Panc1 (cell line): ENCODE measurements at regions of chr1 and their contacts with region 1.

Region 1: GRCh38 chr1:229227298-229227919 is 43.5 kb upstream of the RAB4A start:
- DNase-seq: peak; percentile 35
- ATAC-seq: peak; percentile 58
- H3K4me3 ChIP-seq: no peak overlapping the region
- H3K27ac ChIP-seq: peak overlapping the region; percentile 18; the same call in 1 of the 2 replicates
- H3K4me1 ChIP-seq: peaks cover 48% of the 10 kb centered on the region
- H3K27me3 ChIP-seq: no peaks in the 10 kb centered on the region
- CTCF ChIP-seq: peak; percentile 94

Region 2: DNA sequence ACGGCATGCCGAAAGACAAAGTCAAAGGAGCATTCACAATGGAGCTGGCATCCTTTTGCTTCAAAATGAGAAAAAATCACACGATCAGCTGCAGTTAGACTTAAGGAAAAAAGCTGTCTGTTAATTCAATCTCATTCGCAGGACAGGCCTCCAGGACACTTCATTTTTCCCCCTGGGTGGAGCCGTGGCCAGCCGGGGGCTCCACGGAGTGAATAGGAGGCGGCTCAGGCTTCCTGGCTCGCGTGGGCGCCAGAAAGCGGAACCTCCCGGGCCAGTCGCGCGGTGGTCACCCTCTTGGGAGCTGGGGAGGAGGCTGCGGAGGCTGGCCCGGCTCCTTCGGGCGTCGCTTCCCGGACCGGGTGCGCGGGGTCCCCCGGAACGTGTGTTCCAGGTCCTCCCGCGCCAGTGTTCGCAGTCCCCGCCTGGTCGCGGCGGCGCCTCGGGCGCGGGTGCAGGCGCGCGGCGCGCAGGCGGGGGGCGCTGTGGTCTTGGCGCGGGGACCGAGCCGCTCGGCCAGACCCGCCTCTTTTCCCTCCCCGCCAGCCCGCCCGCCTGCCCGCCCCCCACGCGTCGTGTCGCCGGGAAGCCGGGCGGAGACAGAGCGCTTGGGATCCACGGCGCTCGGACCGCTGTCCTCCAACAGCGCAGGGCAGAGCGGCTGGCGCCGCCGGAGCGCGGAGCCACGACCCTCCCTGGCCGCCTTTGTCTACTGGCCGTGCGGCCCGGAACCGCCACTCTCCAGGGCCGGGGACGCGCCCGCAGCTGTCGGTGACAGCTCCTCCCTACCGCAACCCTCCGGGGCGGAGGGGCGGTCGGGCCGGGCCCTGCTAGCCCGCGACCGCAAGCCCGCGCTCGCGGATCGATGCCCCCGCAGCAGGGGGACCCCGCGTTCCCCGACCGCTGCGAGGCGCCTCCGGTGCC is 492.3 kb before region 1 on chr1 and contains the start of gene RHOU:
- CTCF ChIA-PET with region 1: interaction called, 5 read pairs
- POLR2A ChIA-PET with region 1: no interaction called
- in situ Hi-C with region 1: no loop called
- intact Hi-C with region 1: loop called (anchors 1 kb)
- DNase-seq: no peak
- ATAC-seq: peak; percentile 95
- H3K4me3 ChIP-seq: peak within 1 kb of the TSS; percentile 62 to 63
- H3K27ac ChIP-seq: peak within 1 kb of the TSS; percentile 70
- H3K4me1 ChIP-seq: peaks cover 7% of the 10 kb centered on the region
- H3K27me3 ChIP-seq: no peaks in the 10 kb centered on the region
- CTCF ChIP-seq: peak; percentile 96
- total RNA-seq, gene RHOU: 9.2 TPM

Region 3: DNA sequence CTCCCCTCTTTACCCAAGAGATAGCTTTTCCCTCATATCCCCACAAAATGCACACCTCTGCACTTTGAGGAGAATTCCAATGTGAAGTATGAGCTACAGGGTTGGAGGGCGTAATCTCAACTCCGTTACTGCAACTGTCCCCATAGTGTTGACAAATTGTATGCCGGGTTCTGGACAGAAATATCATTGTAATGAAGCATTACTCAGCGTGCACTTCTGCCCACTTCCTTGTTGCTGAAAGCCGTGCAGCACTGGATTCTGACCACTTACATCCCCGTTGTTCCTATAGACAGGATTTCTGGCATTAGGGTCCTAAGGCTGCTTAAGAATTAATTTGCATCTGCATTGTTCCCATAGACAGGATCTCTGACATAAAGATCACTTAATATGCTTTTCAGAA is 286.5 kb before region 1 on chr1:
- CTCF ChIA-PET with region 1: no interaction called
- POLR2A ChIA-PET with region 1: interaction called, 15 read pairs
- in situ Hi-C with region 1: no loop called
- intact Hi-C with region 1: no loop called
- DNase-seq: no peak
- ATAC-seq: no peak
- H3K4me3 ChIP-seq: no peak overlapping the region
- H3K27ac ChIP-seq: no peak overlapping the region
- H3K4me1 ChIP-seq: no peaks in the 10 kb centered on the region
- H3K27me3 ChIP-seq: no peaks in the 10 kb centered on the region; the same call in 1 of the 2 replicates
- CTCF ChIP-seq: no peak

Region 4: GRCh38 chr1:228998179-228998578 is 229.2 kb before region 1 on chr1:
- CTCF ChIA-PET with region 1: no interaction called
- POLR2A ChIA-PET with region 1: no interaction called
- in situ Hi-C with region 1: no loop called
- intact Hi-C with region 1: no loop called
- DNase-seq: no peak
- ATAC-seq: no peak
- H3K4me3 ChIP-seq: no peak overlapping the region
- H3K27ac ChIP-seq: no peak overlapping the region
- H3K4me1 ChIP-seq: no peaks in the 10 kb centered on the region
- H3K27me3 ChIP-seq: 0 out of 2 replicates have a peak, but pooled peaks cover 2% of the 10 kb centered on the region
- CTCF ChIP-seq: no peak

Region 5: DNA sequence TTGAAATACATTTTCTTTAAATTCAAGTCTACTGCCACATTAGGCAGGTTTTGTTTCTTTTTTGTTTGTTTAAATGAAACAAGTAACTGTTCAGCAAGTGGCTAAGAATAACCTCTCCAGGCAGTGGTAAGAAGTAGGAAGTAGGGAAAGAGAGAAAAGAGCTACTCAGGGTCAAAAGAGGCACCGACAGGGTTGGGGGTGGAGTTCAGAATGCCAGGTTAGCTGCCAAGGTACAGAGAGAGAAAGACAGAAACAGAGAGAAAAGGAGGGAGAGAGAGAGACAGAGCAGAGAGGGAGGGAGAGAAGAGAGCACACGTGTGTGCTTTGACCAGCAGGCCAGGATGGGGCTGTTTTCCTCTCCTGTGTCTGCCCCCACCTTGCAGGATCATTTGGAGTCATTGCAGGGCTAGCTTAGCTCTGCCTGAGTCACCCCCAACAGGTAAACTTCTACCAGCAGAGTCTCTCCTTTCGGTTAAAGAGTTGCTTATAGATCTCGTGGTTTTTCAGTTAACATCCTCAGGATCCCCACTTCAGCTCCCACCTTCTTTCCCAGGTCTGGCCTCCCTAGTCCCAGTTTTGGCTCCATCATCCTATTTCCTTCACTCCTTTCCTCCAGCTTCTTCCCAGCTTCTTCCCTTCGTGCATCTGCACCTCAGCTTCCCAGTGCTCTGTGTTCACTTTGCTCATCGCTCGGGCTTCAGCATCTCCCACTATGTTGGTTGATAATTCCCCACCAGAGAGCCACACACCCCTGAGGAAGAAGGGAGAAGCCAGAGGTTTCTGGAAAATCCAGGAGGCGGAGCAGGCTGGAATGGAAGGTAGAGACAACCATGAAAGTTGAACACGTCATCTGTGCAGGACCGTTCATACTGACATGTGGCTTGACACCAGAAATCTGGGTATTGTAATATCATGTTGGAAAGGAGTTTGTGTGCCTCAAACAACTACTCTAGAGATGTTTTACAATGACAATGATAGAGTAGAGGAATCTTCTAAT is 21.7 kb after region 1 on chr1:
- CTCF ChIA-PET with region 1: no interaction called
- POLR2A ChIA-PET with region 1: no interaction called
- in situ Hi-C with region 1: no loop called
- intact Hi-C with region 1: no loop called
- DNase-seq: no peak
- ATAC-seq: no peak
- H3K4me3 ChIP-seq: no peak overlapping the region
- H3K27ac ChIP-seq: no peak overlapping the region
- H3K4me1 ChIP-seq: 0 out of 2 replicates have a peak, but pooled peaks cover 3% of the 10 kb centered on the region
- H3K27me3 ChIP-seq: no peaks in the 10 kb centered on the region
- CTCF ChIP-seq: no peak

Region 6: DNA sequence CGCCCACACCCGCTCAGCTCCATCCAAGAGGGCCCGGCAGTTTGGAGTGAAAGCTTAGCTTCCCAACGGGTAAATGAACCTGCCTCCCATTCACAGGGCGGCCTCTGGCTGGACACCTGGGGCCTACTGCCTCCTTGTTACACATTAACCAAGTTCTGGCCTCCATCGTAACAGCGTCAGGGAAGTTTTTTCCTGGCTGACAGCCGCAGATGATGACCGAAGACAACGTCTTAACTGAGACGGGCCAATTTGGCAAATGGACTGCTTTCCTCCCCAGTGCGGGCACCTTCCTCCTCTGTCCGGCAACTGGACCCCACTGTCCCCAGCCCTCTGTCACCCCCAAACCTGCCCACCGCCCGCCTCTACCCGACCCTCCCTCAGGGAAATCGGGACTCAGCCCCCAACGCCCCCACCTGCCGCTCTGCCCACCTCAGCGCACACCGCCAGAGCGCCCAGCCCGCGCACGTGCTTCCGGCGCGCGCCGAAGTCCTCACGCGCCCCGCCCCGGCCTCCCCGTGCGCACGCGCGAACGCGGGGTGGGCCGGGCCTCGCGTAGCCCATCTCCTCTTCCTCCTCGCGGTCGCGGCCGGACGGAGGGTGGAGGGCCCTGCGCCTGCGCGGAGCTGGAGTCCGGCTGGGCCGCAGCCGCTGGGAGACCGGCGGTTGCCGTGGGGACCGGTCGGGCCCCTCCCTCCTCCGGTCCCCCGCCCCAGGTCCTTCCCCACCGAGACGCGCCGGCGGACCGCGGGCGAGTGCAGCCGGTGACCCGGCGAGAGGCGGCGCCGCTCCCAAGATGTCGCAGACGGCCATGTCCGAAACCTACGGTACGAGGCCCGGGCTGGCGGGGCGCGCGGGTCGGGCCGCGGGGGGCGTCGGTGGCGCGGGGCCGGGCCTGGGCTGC is 43.4 kb after region 1 on chr1 and contains the start of gene RAB4A:
- CTCF ChIA-PET with region 1: interaction called, 11 read pairs
- POLR2A ChIA-PET with region 1: no interaction called
- in situ Hi-C with region 1: no loop called
- intact Hi-C with region 1: no loop called
- DNase-seq: no peak
- ATAC-seq: peak; percentile 96
- H3K4me3 ChIP-seq: peak within 1 kb of the TSS; percentile 78 to 95
- H3K27ac ChIP-seq: peak within 1 kb of the TSS; percentile 93
- H3K4me1 ChIP-seq: peaks cover 28% of the 10 kb centered on the region
- H3K27me3 ChIP-seq: no peaks in the 10 kb centered on the region
- CTCF ChIP-seq: no peak
- total RNA-seq, gene RAB4A: 73.0 TPM